ENCODE measurements at regions of chrX and their contacts with region 1.

Region 1: GRCh38 chrX:40153335-40154249 is 55.8 kb upstream of the BCOR start:
- DNase-seq: peak; percentile 71 to 82
- ATAC-seq: peak; percentile 15
- H3K4me3 ChIP-seq: peak overlapping the region; percentile 31 to 38
- H3K27ac ChIP-seq: no peak overlapping the region
- H3K4me1 ChIP-seq: no peaks in the 10 kb centered on the region
- H3K27me3 ChIP-seq: peaks cover 0 to 2% of the 10 kb centered on the region in 2 donors

Region 2: GRCh38 chrX:39928704-39929385 is 224.7 kb before region 1 on chrX:
- intact Hi-C with region 1: no loop called
- DNase-seq: peak in 1 of 2 donors; percentile 12
- ATAC-seq: no peak
- H3K4me3 ChIP-seq: no peak overlapping the region
- H3K27ac ChIP-seq: no peak overlapping the region
- H3K4me1 ChIP-seq: no peaks in the 10 kb centered on the region
- H3K27me3 ChIP-seq: no peaks in the 10 kb centered on the region

Region 3: GRCh38 chrX:40097497-40098263 is 55.9 kb before region 1 on chrX and contains the start of gene BCOR:
- intact Hi-C with region 1: loop called in 1 of 2 experiments (anchors 5 kb)
- DNase-seq: peak; percentile 86 to 91
- ATAC-seq: peak; percentile 58
- H3K4me3 ChIP-seq: peak within 1 kb of the TSS; percentile 55 to 86
- H3K27ac ChIP-seq: peak within 1 kb of the TSS; percentile 30 to 87
- H3K4me1 ChIP-seq: no peaks in the 10 kb centered on the region
- H3K27me3 ChIP-seq: peaks cover 0 to 2% of the 10 kb centered on the region in 2 donors
- total RNA-seq, gene BCOR: 22.6 to 46.7 TPM

Region 4: GRCh38 chrX:40108959-40109287 is 44.7 kb before region 1 on chrX:
- intact Hi-C with region 1: loop called (anchors 5 kb)
- DNase-seq: peak; percentile 87 to 95
- ATAC-seq: peak; percentile 73
- H3K4me3 ChIP-seq: peak overlapping the region; percentile 50 to 81
- H3K27ac ChIP-seq: peak overlapping the region; percentile 67 to 94
- H3K4me1 ChIP-seq: no peaks in the 10 kb centered on the region
- H3K27me3 ChIP-seq: no peaks in the 10 kb centered on the region

Measured in aorta (tissue), 5 donors.